ENCODE measurements at regions of chr10 and their contacts with region 1.

Region 1: GRCh38 chr10:131874991-131875451 is 25.8 kb upstream of the PPP2R2D start:
- DNase-seq: no peak
- H3K4me3 ChIP-seq: no peak overlapping the region
- H3K27ac ChIP-seq: no peak overlapping the region
- H3K4me1 ChIP-seq: peaks cover 0 to 11% (median 0%) of the 10 kb centered on the region in 3 donors
- H3K27me3 ChIP-seq: peaks cover 0 to 84% (median 0%) of the 10 kb centered on the region in 4 donors
- CTCF ChIP-seq: peak; percentile 19 to 74 (median 54)
- POLR2A ChIP-seq: no peak

Region 2: GRCh38 chr10:130179640-130180039 is 1695.4 kb before region 1 on chr10:
- intact Hi-C with region 1: loop called (anchors 10 kb)
- DNase-seq: no peak
- H3K4me3 ChIP-seq: no peak overlapping the region
- H3K27ac ChIP-seq: no peak overlapping the region
- H3K4me1 ChIP-seq: peaks cover 0 to 7% (median 0%) of the 10 kb centered on the region in 3 donors
- H3K27me3 ChIP-seq: no peaks in the 10 kb centered on the region
- CTCF ChIP-seq: peak in 3 of 6 experiments; percentile 10 to 40 (median 14)
- POLR2A ChIP-seq: no peak

Region 3: DNA sequence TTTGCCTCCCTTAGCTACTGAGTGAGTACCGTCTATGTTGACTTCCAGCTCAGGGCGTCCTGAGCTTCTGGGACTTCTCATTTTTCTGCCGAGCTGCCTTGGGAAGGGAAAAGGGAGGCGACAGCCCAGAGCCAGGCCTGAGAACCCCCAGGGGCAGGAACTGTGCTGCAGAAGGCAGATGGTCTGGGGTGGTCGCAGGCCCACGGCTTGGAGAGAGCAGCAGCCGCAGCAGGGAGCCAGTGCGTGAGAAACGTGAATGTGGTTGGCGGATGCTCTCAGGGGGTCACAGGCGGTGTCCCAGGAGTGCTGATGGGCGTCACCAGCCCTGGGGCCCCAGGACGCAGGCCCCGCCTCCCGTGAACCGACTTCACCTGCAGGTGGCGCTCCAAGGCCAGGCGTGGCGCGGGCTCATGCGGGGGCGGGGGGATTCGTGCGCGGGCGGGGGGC is 512.8 kb after region 1 on chr10:
- intact Hi-C with region 1: no loop called
- DNase-seq: no peak
- H3K4me3 ChIP-seq: peak overlapping the region in 2 of 4 donors; percentile 13 to 43
- H3K27ac ChIP-seq: peak overlapping the region in 3 of 4 donors; percentile 22 to 35 (median 25)
- H3K4me1 ChIP-seq: peaks cover 4 to 23% (median 6%) of the 10 kb centered on the region in 3 donors
- H3K27me3 ChIP-seq: no peaks in the 10 kb centered on the region
- CTCF ChIP-seq: peak; percentile 59 to 76 (median 70)
- POLR2A ChIP-seq: no peak

Measured in esophagus squamous epithelium (tissue), 5 donors.